ENCODE measurements at regions of chr1 and their contacts with region 1.

Region 1: GRCh38 chr1:223811634-223812415 is 33.9 kb downstream of the TP53BP2 start:
- DNase-seq: peak; percentile 24
- H3K4me3 ChIP-seq: no peak overlapping the region; a peak in 1 of 4 replicates
- H3K27ac ChIP-seq: no peak overlapping the region
- H3K4me1 ChIP-seq: no peaks in the 10 kb centered on the region
- H3K27me3 ChIP-seq: no peaks in the 10 kb centered on the region
- CTCF ChIP-seq: peak; percentile 69
- EP300 ChIP-seq: no peak
- RAD21 ChIP-seq: peak; percentile 85

Region 2: GRCh38 chr1:223780949-223781348 is 30.9 kb before region 1 on chr1:
- CTCF ChIA-PET with region 1: interaction called, 10 read pairs
- POLR2A ChIA-PET with region 1: no interaction called
- DNase-seq: no peak
- H3K4me3 ChIP-seq: no peak overlapping the region
- H3K27ac ChIP-seq: no peak overlapping the region
- H3K4me1 ChIP-seq: peaks cover 4 to 8% of the 10 kb centered on the region in 2 experiments; a peak in 2 of 4 replicates
- H3K27me3 ChIP-seq: no peaks in the 10 kb centered on the region
- CTCF ChIP-seq: no peak
- EP300 ChIP-seq: no peak
- RAD21 ChIP-seq: no peak

Region 3: GRCh38 chr1:223825767-223826748 is 14.2 kb after region 1 on chr1:
- CTCF ChIA-PET with region 1: interaction called, 14 read pairs
- POLR2A ChIA-PET with region 1: no interaction called
- DNase-seq: no peak
- H3K4me3 ChIP-seq: no peak overlapping the region
- H3K27ac ChIP-seq: no peak overlapping the region
- H3K4me1 ChIP-seq: peaks cover 5 to 15% of the 10 kb centered on the region in 2 experiments; a peak in 3 of 4 replicates
- H3K27me3 ChIP-seq: no peaks in the 10 kb centered on the region
- CTCF ChIP-seq: no peak
- EP300 ChIP-seq: no peak
- RAD21 ChIP-seq: no peak

Region 4: DNA sequence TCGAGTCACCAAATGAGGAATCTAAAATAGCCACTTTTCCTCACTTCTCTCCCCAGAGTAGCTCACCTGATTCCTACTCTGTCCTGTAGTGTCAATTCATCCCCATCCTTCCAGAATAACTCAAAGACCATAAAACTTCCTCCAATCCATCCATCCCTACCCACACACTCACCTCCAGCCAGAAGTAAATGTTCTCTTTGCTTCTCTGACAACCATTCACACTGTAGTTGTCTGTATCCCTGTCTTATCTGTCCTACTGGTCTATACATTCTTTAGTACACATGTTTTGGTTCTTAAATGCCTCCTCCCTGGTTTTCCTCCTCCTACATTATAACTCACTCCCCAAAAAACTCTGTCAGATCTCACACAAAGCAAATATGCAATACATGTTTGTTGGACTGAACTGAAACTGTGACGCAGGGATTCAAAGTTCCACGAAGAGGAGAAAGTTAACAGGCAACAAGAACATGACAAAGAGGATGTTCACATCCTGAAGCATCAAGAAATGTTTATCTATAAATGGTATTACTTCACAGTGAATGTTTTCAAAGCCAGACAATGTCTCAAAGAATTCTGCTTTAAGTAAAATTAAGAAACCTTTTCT is 22.9 kb after region 1 on chr1:
- CTCF ChIA-PET with region 1: interaction called, 21 read pairs
- POLR2A ChIA-PET with region 1: no interaction called
- DNase-seq: no peak
- H3K4me3 ChIP-seq: no peak overlapping the region
- H3K27ac ChIP-seq: peak overlapping the region in 1 of 2 experiments; percentile 98; a peak in 2 of 4 replicates
- H3K4me1 ChIP-seq: peaks cover 23 to 51% of the 10 kb centered on the region in 2 experiments
- H3K27me3 ChIP-seq: no peaks in the 10 kb centered on the region
- CTCF ChIP-seq: no peak
- EP300 ChIP-seq: no peak
- RAD21 ChIP-seq: no peak

Region 5: DNA sequence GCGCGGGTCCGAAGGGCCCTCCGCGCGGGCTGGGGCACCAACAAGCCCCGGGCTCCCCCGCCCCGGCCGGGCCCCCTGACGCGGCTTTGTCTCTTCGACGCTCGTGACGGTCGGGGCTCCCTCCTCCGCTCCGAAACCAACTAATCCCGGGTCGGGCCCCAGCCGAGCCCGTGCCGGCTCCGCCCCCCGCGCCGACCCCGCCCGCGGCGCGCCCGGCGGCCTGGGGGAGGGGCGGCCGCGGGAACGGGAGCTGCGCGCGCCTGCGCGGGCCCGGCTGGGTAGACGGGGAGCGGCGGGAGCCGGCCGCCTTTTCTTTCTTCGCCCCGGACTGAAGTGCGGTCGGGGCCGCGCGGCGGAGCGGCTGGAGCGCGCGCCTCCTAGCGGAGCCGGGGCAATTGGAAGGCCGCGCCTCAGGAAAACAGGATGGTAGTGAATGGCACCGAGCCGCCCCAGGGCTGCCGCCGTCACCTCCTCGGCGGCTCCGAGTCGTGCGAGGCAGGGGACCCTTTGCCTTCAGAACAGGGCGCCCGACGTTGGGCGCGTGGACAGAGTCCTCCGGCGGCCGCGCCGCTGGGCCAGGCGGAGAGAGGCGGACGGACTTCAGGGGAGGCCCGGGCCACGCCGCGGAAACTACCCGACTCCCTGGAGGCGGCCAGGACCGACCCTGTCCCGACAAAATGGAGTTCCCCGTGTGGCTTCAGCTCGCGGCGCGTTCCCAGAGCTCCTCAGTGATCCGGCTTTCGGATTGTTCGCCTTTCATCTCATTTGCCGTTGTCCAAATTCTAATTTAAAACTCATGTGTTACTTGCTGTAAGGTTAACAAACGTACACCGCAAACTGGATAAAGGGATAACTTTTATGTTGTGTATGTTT is 34.2 kb after region 1 on chr1 and contains the start of gene TP53BP2:
- CTCF ChIA-PET with region 1: interaction called, 21 read pairs
- POLR2A ChIA-PET with region 1: no interaction called
- DNase-seq: peak; percentile 97
- H3K4me3 ChIP-seq: peak within 1 kb of the TSS; percentile 81 to 94
- H3K27ac ChIP-seq: peak within 1 kb of the TSS; percentile 96 to 98
- H3K4me1 ChIP-seq: peaks cover 13 to 16% of the 10 kb centered on the region in 2 experiments; a peak in 3 of 4 replicates
- H3K27me3 ChIP-seq: no peaks in the 10 kb centered on the region
- CTCF ChIP-seq: peak; percentile 70
- EP300 ChIP-seq: no peak; a peak in 1 of 4 replicates
- RAD21 ChIP-seq: peak; percentile 40
- polyA plus RNA-seq, gene TP53BP2: 11.4 and 14.8 TPM in 2 replicates

Region 6: DNA sequence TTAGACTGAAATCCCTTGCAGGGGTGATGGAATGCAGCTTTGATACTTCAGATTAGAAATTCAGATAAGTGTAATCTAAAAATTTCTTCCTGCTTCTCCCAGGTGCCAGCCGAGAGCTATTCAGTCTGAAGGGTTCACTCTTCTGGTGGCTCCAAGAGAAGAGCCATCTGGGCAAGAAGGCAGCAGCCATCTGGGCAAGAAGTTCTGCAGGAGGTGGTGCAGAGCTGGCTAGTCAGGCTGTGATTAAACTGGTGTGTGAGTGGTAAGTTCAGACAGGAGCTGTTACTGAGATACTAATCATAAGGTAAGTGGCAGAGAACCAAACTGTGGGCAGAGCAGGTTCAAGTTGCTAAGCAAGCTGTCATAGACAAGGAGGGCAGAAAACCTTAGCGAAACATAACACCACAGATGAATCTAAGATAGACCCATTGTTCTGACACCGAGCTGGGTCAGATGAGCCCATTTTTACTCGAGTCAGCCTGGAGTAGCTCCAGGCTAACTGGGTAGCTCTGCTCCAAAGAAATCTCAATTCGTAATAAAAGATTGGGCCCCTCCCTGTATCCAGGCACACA is 48.3 kb after region 1 on chr1:
- CTCF ChIA-PET with region 1: no interaction called
- POLR2A ChIA-PET with region 1: no interaction called
- DNase-seq: no peak
- H3K4me3 ChIP-seq: no peak overlapping the region
- H3K27ac ChIP-seq: no peak overlapping the region
- H3K4me1 ChIP-seq: no peaks in the 10 kb centered on the region; a peak in 1 of 4 replicates
- H3K27me3 ChIP-seq: no peaks in the 10 kb centered on the region
- CTCF ChIP-seq: no peak
- EP300 ChIP-seq: no peak
- RAD21 ChIP-seq: no peak

Region 7: GRCh38 chr1:224052772-224053171 is 240.9 kb after region 1 on chr1:
- CTCF ChIA-PET with region 1: interaction called, 26 read pairs
- POLR2A ChIA-PET with region 1: no interaction called
- DNase-seq: no peak
- H3K4me3 ChIP-seq: no peak overlapping the region
- H3K27ac ChIP-seq: peak overlapping the region in 1 of 2 experiments; percentile 44; a peak in 2 of 4 replicates
- H3K4me1 ChIP-seq: no peaks in the 10 kb centered on the region
- H3K27me3 ChIP-seq: no peaks in the 10 kb centered on the region
- CTCF ChIP-seq: no peak
- EP300 ChIP-seq: no peak
- RAD21 ChIP-seq: no peak

Region 8: DNA sequence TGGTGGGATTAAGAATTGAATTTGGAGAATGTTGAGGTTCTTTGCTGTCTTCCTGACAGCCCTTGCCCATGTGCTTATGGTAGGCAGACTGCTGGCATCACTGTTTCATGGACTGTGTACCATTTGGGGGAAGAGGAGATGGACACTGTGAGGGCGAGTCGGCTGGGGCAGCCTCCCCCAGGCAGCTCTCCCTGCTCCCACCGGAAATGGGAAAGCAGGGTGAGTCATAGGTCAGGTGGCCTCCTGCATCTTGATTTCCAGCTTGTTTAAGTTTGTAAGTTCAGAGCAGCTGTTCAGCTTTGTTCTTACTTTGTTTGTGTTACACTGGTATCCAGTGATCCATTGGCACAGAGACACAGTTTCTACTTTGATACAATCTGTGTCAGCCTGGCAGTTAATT is 717.1 kb after region 1 on chr1:
- CTCF ChIA-PET with region 1: no interaction called
- POLR2A ChIA-PET with region 1: no interaction called
- DNase-seq: no peak
- H3K4me3 ChIP-seq: no peak overlapping the region
- H3K27ac ChIP-seq: peak overlapping the region; percentile 48 to 71; a peak in 3 of 4 replicates
- H3K4me1 ChIP-seq: peaks cover 8 to 22% of the 10 kb centered on the region in 2 experiments
- H3K27me3 ChIP-seq: no peaks in the 10 kb centered on the region
- CTCF ChIP-seq: no peak
- EP300 ChIP-seq: peak in 1 of 2 experiments; percentile 58; a peak in 1 of 4 replicates
- RAD21 ChIP-seq: no peak

Measured in SK-N-SH (cell line).